ENCODE measurements at regions of chr5 and their contacts with region 1.

Region 1: GRCh38 chr5:135191084-135191826 is 157.2 kb upstream of the PITX1 start:
- DNase-seq: peak; percentile 92
- H3K4me3 ChIP-seq: peak overlapping the region; percentile 50 to 61 (median 52)
- H3K27ac ChIP-seq: peak overlapping the region in 1 of 4 donors; percentile 49
- H3K4me1 ChIP-seq: peaks cover 4 to 12% (median 10%) of the 10 kb centered on the region in 4 donors
- H3K27me3 ChIP-seq: peaks cover 0 to 11% (median 0%) of the 10 kb centered on the region in 4 donors
- CTCF ChIP-seq: peak; percentile 87 to 96 (median 92)
- EP300 ChIP-seq: no peak
- POLR2A ChIP-seq: no peak

Region 2: GRCh38 chr5:135013947-135014570 is 177.2 kb before region 1 on chr5:
- intact Hi-C with region 1: loop called (anchors 10 kb)
- DNase-seq: no peak
- H3K4me3 ChIP-seq: no peak overlapping the region
- H3K27ac ChIP-seq: peak overlapping the region; percentile 62 to 70 (median 66)
- H3K4me1 ChIP-seq: peaks cover 21 to 36% (median 26%) of the 10 kb centered on the region in 4 donors
- H3K27me3 ChIP-seq: no peaks in the 10 kb centered on the region
- CTCF ChIP-seq: no peak
- EP300 ChIP-seq: no peak
- POLR2A ChIP-seq: no peak

Region 3: GRCh38 chr5:135332519-135333150 is 141.4 kb after region 1 on chr5:
- intact Hi-C with region 1: loop called (anchors 5 kb)
- DNase-seq: no peak
- H3K4me3 ChIP-seq: no peak overlapping the region
- H3K27ac ChIP-seq: no peak overlapping the region
- H3K4me1 ChIP-seq: peaks cover 0 to 42% (median 16%) of the 10 kb centered on the region in 4 donors
- H3K27me3 ChIP-seq: no peaks in the 10 kb centered on the region
- CTCF ChIP-seq: peak; percentile 50 to 59 (median 51)
- EP300 ChIP-seq: no peak
- POLR2A ChIP-seq: no peak

Measured in esophagus muscularis mucosa (tissue), 4 donors.